CD14-positive monocyte (primary cell): ENCODE measurements at regions of chr11 and their contacts with region 1.

Region 1: DNA sequence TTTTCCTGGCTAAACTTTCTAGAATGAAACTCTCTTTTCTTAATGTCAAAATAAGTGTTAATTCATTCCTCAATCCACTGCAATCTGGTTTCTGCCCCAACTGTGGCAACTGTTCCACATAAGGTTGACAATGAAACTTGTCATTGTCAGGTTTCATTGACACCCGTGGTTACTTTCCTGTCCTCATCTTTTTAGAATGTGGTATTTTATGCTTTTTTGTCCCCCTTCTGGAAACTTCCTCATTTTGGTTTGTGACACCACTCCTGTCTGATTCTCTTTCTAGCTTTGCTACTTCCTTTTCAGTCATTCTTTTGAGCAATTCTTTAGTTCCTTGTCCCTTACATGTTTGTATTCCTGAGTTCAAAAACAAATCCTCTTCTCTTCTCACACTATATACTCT is 7.5 kb upstream of the PDE3B start:
- DNase-seq: peak; percentile 74 to 88 (median 82)
- H3K4me3 ChIP-seq: peak overlapping the region in 1 of 3 experiments; percentile 42
- H3K4me3 Mint-ChIP-seq: peak overlapping the region in 1 of 2 donors; percentile 66
- H3K27ac ChIP-seq: peak overlapping the region in 1 of 2 donors; percentile 84
- H3K27ac Mint-ChIP-seq: peak overlapping the region; percentile 85 to 95 (median 91)
- H3K4me1 ChIP-seq: peaks cover 24 to 40% of the 10 kb centered on the region in 2 donors
- H3K4me1 Mint-ChIP-seq: peaks cover 47% of the 10 kb centered on the region
- H3K27me3 ChIP-seq: no peaks in the 10 kb centered on the region
- H3K27me3 Mint-ChIP-seq: peaks cover 0 to 4% (median 2%) of the 10 kb centered on the region in 3 donors
- CTCF ChIP-seq: no peak

Region 2: GRCh38 chr11:14519917-14520746 is 116.0 kb before region 1 on chr11 and contains the start of gene PSMA1:
- intact Hi-C with region 1: loop called in 1 of 2 experiments (anchors 5 kb)
- DNase-seq: peak; percentile 88 to 94 (median 92)
- H3K4me3 ChIP-seq: peak within 1 kb of the TSS; percentile 67 to 93 (median 80)
- H3K4me3 Mint-ChIP-seq: peak within 1 kb of the TSS; percentile 90 to 97
- H3K27ac ChIP-seq: peak within 1 kb of the TSS; percentile 95
- H3K27ac Mint-ChIP-seq: peak within 1 kb of the TSS; percentile 97 to 99 (median 99)
- H3K4me1 ChIP-seq: peaks cover 17% of the 10 kb centered on the region in 2 donors
- H3K4me1 Mint-ChIP-seq: peaks cover 18% of the 10 kb centered on the region
- H3K27me3 ChIP-seq: no peaks in the 10 kb centered on the region
- H3K27me3 Mint-ChIP-seq: peaks cover 0 to 1% (median 0%) of the 10 kb centered on the region in 3 donors
- CTCF ChIP-seq: peak; percentile 35
- polyA plus RNA-seq, gene PSMA1: 163 to 228 (median 201) TPM

Region 3: DNA sequence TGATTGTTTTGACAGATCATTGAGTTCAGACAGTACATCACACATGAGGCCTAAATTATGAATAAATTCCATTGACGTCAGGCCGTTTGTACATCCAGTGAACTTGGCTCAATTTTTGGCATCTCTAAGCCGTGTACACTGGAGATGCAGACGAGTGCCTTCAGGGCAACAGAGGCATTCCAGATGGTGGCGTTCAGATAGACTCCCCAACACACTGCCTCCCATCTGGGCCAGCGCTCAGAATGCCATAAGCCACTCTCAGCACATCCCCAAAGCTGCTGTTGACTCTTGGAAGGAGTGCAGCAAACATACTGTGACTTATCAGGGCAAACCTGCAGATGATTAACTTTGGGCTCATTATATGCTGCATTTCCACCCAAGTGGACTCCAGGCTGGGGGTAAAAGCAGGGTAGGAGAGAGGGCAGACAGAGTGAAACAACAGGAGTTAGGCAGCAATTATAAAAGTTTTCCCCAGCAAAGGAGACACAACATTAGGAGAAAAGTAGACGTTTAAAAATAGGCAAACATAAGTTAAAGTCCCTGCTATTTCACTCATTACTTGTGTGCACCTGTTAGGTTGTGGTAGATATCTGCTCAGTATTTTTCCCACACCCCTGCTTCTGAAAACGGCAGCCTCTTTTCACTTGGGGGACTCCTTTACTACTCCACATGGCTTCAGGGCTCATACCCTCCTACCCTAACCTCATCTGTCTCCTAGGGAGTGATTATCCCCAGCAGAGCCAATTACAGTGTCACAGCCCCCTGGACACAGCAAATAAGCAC is 52.7 kb before region 1 on chr11:
- intact Hi-C with region 1: no loop called
- DNase-seq: no peak
- H3K4me3 ChIP-seq: no peak overlapping the region
- H3K4me3 Mint-ChIP-seq: no peak overlapping the region
- H3K27ac ChIP-seq: no peak overlapping the region
- H3K27ac Mint-ChIP-seq: peak overlapping the region in 3 of 7 donors; percentile 3 to 41 (median 19)
- H3K4me1 ChIP-seq: peaks cover 29 to 33% of the 10 kb centered on the region in 2 donors
- H3K4me1 Mint-ChIP-seq: peaks cover 33% of the 10 kb centered on the region
- H3K27me3 ChIP-seq: no peaks in the 10 kb centered on the region
- H3K27me3 Mint-ChIP-seq: peaks cover 0 to 1% (median 1%) of the 10 kb centered on the region in 3 donors
- CTCF ChIP-seq: no peak